ENCODE measurements at regions of chr6 and their contacts with region 1.

Region 1: GRCh38 chr6:133923938-133924593 is 29.0 kb upstream of the TBPL1 start:
- DNase-seq: peak; percentile 33
- ATAC-seq: peak; percentile 93
- H3K4me3 ChIP-seq: no peak overlapping the region
- H3K27ac ChIP-seq: no peak overlapping the region
- H3K4me1 ChIP-seq: no peaks in the 10 kb centered on the region
- H3K27me3 ChIP-seq: no peaks in the 10 kb centered on the region
- CTCF ChIP-seq: peak; percentile 78 to 93 (median 82)
- EP300 ChIP-seq: no peak
- POLR2A ChIP-seq: no peak
- RAD21 ChIP-seq: peak; percentile 100

Region 2: GRCh38 chr6:133778414-133779130 is 145.5 kb before region 1 on chr6:
- CTCF ChIA-PET with region 1: no interaction called
- POLR2A ChIA-PET with region 1: no interaction called
- RAD21 ChIA-PET with region 1: no interaction called
- SMC1A ChIA-PET with region 1: no interaction called
- in situ Hi-C with region 1: no loop called
- intact Hi-C with region 1: no loop called
- DNase-seq: no peak
- ATAC-seq: no peak
- H3K4me3 ChIP-seq: no peak overlapping the region
- H3K27ac ChIP-seq: no peak overlapping the region
- H3K4me1 ChIP-seq: no peaks in the 10 kb centered on the region
- H3K27me3 ChIP-seq: no peaks in the 10 kb centered on the region
- CTCF ChIP-seq: no peak
- EP300 ChIP-seq: no peak
- POLR2A ChIP-seq: no peak
- RAD21 ChIP-seq: no peak

Region 3: GRCh38 chr6:133837801-133838349 is 86.2 kb before region 1 on chr6:
- CTCF ChIA-PET with region 1: interaction called, 10 read pairs
- POLR2A ChIA-PET with region 1: no interaction called
- RAD21 ChIA-PET with region 1: no interaction called
- SMC1A ChIA-PET with region 1: interaction called, 3 read pairs
- in situ Hi-C with region 1: no loop called
- intact Hi-C with region 1: no loop called
- DNase-seq: no peak
- ATAC-seq: peak; percentile 95
- H3K4me3 ChIP-seq: peak overlapping the region; percentile 41; the same call in 1 of the 2 replicates
- H3K27ac ChIP-seq: no peak overlapping the region
- H3K4me1 ChIP-seq: no peaks in the 10 kb centered on the region
- H3K27me3 ChIP-seq: no peaks in the 10 kb centered on the region
- CTCF ChIP-seq: peak; percentile 65 to 80 (median 70)
- EP300 ChIP-seq: no peak
- POLR2A ChIP-seq: no peak
- RAD21 ChIP-seq: peak; percentile 41

Region 4: GRCh38 chr6:133966654-133967329 is 42.7 kb after region 1 on chr6:
- CTCF ChIA-PET with region 1: interaction called, 11 read pairs
- POLR2A ChIA-PET with region 1: no interaction called
- RAD21 ChIA-PET with region 1: interaction called, 5 read pairs
- SMC1A ChIA-PET with region 1: interaction called, 5 read pairs
- in situ Hi-C with region 1: no loop called
- intact Hi-C with region 1: no loop called
- DNase-seq: peak; percentile 34
- ATAC-seq: peak; percentile 85
- H3K4me3 ChIP-seq: peak overlapping the region; percentile 4; the same call in 1 of the 2 replicates
- H3K27ac ChIP-seq: peak overlapping the region; percentile 30
- H3K4me1 ChIP-seq: peaks cover 14% of the 10 kb centered on the region; the same call in 1 of the 2 replicates
- H3K27me3 ChIP-seq: no peaks in the 10 kb centered on the region
- CTCF ChIP-seq: no peak
- EP300 ChIP-seq: no peak
- POLR2A ChIP-seq: no peak
- RAD21 ChIP-seq: no peak

Region 5: DNA sequence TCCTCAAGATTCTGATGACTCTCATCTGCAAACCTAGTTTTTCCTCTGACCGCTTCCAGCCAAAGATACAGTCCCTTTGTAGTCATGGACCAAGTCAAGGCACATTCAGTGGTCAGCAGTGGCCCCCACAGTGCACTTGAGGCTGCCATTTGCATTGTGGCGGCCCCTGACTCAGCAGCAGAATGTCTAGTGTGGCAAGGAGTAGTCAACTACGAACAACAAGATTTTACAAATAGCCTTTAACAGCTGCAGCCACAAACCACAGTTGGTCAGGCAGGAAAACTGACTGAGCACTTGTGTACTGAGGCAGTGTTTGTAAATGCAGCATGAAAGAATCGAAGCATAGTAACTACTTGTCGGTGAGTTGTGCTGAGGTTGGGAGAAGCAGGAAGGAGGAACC is 78.8 kb after region 1 on chr6:
- CTCF ChIA-PET with region 1: interaction called, 11 read pairs
- POLR2A ChIA-PET with region 1: no interaction called
- RAD21 ChIA-PET with region 1: no interaction called
- SMC1A ChIA-PET with region 1: interaction called, 5 read pairs
- in situ Hi-C with region 1: no loop called
- intact Hi-C with region 1: no loop called
- DNase-seq: no peak
- ATAC-seq: peak; percentile 61
- H3K4me3 ChIP-seq: no peak overlapping the region
- H3K27ac ChIP-seq: no peak overlapping the region
- H3K4me1 ChIP-seq: no peaks in the 10 kb centered on the region
- H3K27me3 ChIP-seq: no peaks in the 10 kb centered on the region
- CTCF ChIP-seq: no peak
- EP300 ChIP-seq: no peak
- POLR2A ChIP-seq: no peak
- RAD21 ChIP-seq: no peak

Region 6: GRCh38 chr6:134063966-134064445 is 139.9 kb after region 1 on chr6:
- CTCF ChIA-PET with region 1: interaction called, 216 read pairs
- POLR2A ChIA-PET with region 1: no interaction called
- RAD21 ChIA-PET with region 1: interaction called, 35 read pairs
- SMC1A ChIA-PET with region 1: interaction called, 61 read pairs
- in situ Hi-C with region 1: loop called (anchors 10 kb)
- intact Hi-C with region 1: loop called (anchors 1 kb)
- DNase-seq: no peak
- ATAC-seq: peak; percentile 97
- H3K4me3 ChIP-seq: no peak overlapping the region
- H3K27ac ChIP-seq: no peak overlapping the region
- H3K4me1 ChIP-seq: no peaks in the 10 kb centered on the region
- H3K27me3 ChIP-seq: no peaks in the 10 kb centered on the region
- CTCF ChIP-seq: peak; percentile 86 to 94 (median 88)
- EP300 ChIP-seq: no peak
- POLR2A ChIP-seq: no peak
- RAD21 ChIP-seq: peak; percentile 80

Region 7: GRCh38 chr6:134103006-134103405 is 178.9 kb after region 1 on chr6:
- CTCF ChIA-PET with region 1: interaction called, 276 read pairs
- POLR2A ChIA-PET with region 1: no interaction called
- RAD21 ChIA-PET with region 1: interaction called, 133 read pairs
- SMC1A ChIA-PET with region 1: interaction called, 187 read pairs
- in situ Hi-C with region 1: loop called (anchors 5 kb)
- intact Hi-C with region 1: no loop called
- DNase-seq: no peak
- ATAC-seq: no peak
- H3K4me3 ChIP-seq: no peak overlapping the region
- H3K27ac ChIP-seq: no peak overlapping the region
- H3K4me1 ChIP-seq: no peaks in the 10 kb centered on the region
- H3K27me3 ChIP-seq: no peaks in the 10 kb centered on the region
- CTCF ChIP-seq: no peak
- EP300 ChIP-seq: no peak
- POLR2A ChIP-seq: no peak
- RAD21 ChIP-seq: no peak